Activated naive CD4-positive, alpha-beta T cell treated with anti-CD3 and anti-CD28 coated beads for 36 hours (primary cell): ENCODE measurements at regions of chr16 and their contacts with region 1.

Region 1: GRCh38 chr16:27235055-27235937 is 32.0 kb downstream of the KDM8 start:
- DNase-seq: peak; percentile 89
- H3K4me3 Mint-ChIP-seq: peak overlapping the region; percentile 65
- H3K27ac Mint-ChIP-seq: peak overlapping the region; percentile 98
- H3K4me1 Mint-ChIP-seq: peaks cover 98% of the 10 kb centered on the region
- H3K27me3 Mint-ChIP-seq: no peaks in the 10 kb centered on the region

Region 2: DNA sequence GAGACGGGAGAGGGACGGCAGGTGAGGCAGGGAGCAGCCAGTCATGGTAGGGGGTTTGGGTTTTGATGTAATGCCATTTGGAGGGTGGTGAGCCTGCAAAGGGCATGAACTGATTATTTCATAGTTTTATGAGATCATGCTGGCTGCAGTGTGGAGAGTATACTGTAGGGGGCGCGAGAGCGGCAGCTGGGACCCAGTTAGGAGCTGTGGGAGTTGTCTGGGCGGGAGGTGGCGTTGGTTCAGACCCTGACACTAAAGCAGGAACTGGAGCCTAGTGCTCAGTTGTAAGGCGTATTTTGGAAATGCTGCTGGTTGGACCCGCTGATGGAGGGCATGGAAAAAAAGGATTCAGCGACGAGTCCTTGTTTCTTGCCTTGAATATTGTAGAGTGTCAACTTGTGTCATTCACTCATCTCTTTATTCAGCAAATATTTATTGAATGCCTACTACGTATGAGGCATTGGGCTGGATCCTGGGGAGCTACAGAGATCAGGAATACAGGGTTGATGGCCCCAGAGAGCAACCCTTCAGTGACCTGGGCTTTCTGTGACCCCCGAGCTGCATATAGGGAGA is 55.7 kb before region 1 on chr16:
- CTCF ChIA-PET with region 1: interaction called, 38 read pairs
- intact Hi-C with region 1: loop called (anchors 1 kb)
- DNase-seq: peak; percentile 98
- H3K4me3 Mint-ChIP-seq: no peak overlapping the region
- H3K27ac Mint-ChIP-seq: peak overlapping the region; percentile 67
- H3K4me1 Mint-ChIP-seq: peaks cover 48% of the 10 kb centered on the region
- H3K27me3 Mint-ChIP-seq: no peaks in the 10 kb centered on the region

Region 3: GRCh38 chr16:27253526-27253930 is 18.2 kb after region 1 on chr16:
- CTCF ChIA-PET with region 1: interaction called, 43 read pairs
- intact Hi-C with region 1: loop called (anchors 1 kb)
- DNase-seq: no peak
- H3K4me3 Mint-ChIP-seq: peak overlapping the region; percentile 44
- H3K27ac Mint-ChIP-seq: peak overlapping the region; percentile 92
- H3K4me1 Mint-ChIP-seq: peaks cover 91% of the 10 kb centered on the region
- H3K27me3 Mint-ChIP-seq: no peaks in the 10 kb centered on the region

Region 4: DNA sequence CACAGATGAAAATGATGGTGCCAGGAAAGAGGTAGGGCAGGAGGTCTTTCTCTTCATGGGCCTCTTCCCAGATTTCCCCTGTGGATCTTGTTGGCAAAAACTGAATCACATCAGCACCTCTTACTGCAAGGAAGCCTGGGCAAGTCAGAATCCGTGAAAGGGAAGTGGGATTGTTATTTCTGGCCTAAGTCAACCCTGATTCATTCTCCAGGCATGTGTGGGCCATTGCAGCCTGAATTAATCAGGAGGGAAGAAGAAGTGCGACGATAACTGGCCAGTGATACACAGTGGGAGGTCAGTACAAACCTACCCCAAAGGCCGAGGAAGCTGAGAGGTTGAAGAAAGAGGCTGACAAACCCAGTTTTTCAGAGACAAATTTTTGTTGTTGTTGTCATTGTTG is 51.2 kb after region 1 on chr16:
- CTCF ChIA-PET with region 1: interaction called, 6 read pairs
- intact Hi-C with region 1: loop called (anchors 1 kb)
- DNase-seq: no peak
- H3K4me3 Mint-ChIP-seq: no peak overlapping the region
- H3K27ac Mint-ChIP-seq: no peak overlapping the region
- H3K4me1 Mint-ChIP-seq: peaks cover 72% of the 10 kb centered on the region
- H3K27me3 Mint-ChIP-seq: peaks cover 8% of the 10 kb centered on the region

Region 5: DNA sequence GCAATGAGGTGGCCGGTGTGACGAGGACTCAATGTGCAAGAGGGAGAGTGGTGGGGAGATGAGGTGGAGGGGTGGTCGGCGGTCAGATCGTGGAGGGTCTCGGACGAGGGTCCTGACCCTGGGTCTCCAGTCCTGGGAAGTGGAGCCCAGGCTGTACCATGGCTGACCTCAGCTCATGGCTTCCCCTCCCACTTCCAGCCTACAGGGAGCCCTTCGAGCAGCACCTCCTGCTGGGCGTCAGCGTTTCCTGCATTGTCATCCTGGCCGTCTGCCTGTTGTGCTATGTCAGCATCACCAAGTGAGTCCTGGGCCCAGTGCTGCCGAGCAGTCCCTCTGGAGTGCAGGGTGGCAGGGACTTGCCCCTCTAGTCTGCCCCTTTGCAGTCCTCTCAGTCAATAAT is 120.3 kb after region 1 on chr16:
- CTCF ChIA-PET with region 1: interaction called, 33 read pairs
- intact Hi-C with region 1: no loop called
- DNase-seq: peak; percentile 71
- H3K4me3 Mint-ChIP-seq: no peak overlapping the region
- H3K27ac Mint-ChIP-seq: peak overlapping the region; percentile 76
- H3K4me1 Mint-ChIP-seq: peaks cover 13% of the 10 kb centered on the region
- H3K27me3 Mint-ChIP-seq: no peaks in the 10 kb centered on the region

Region 6: DNA sequence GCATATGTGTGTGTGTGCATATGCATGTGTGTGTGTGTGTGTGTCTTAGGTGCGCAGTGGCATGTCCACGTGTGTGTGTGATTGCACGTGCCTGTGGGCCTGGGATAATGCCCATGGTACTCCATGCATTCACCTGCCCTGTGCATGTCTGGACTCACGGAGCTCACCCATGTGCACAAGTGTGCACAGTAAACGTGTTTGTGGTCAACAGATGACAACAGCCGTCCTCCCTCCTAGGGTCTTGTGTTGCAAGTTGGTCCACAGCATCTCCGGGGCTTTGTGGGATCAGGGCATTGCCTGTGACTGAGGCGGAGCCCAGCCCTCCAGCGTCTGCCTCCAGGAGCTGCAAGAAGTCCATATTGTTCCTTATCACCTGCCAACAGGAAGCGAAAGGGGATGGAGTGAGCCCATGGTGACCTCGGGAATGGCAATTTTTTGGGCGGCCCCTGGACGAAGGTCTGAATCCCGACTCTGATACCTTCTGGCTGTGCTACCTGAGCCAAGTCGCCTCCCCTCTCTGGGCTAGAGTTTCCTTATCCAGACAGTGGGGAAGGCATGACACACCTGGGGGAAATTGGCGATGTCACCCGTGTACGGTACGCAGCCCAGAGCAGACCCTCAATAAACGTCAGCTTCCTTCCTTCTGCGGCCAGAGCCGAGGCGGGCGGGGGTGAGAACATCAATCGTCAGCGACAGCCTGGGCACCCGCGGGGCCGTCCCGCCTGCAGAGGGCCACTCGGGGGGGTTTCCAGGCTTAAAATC is 214.3 kb after region 1 on chr16:
- CTCF ChIA-PET with region 1: interaction called, 3 read pairs
- intact Hi-C with region 1: loop called (anchors 1 kb)
- DNase-seq: peak; percentile 92
- H3K4me3 Mint-ChIP-seq: peak overlapping the region; percentile 61
- H3K27ac Mint-ChIP-seq: peak overlapping the region; percentile 94
- H3K4me1 Mint-ChIP-seq: peaks cover 86% of the 10 kb centered on the region
- H3K27me3 Mint-ChIP-seq: no peaks in the 10 kb centered on the region

Region 7: DNA sequence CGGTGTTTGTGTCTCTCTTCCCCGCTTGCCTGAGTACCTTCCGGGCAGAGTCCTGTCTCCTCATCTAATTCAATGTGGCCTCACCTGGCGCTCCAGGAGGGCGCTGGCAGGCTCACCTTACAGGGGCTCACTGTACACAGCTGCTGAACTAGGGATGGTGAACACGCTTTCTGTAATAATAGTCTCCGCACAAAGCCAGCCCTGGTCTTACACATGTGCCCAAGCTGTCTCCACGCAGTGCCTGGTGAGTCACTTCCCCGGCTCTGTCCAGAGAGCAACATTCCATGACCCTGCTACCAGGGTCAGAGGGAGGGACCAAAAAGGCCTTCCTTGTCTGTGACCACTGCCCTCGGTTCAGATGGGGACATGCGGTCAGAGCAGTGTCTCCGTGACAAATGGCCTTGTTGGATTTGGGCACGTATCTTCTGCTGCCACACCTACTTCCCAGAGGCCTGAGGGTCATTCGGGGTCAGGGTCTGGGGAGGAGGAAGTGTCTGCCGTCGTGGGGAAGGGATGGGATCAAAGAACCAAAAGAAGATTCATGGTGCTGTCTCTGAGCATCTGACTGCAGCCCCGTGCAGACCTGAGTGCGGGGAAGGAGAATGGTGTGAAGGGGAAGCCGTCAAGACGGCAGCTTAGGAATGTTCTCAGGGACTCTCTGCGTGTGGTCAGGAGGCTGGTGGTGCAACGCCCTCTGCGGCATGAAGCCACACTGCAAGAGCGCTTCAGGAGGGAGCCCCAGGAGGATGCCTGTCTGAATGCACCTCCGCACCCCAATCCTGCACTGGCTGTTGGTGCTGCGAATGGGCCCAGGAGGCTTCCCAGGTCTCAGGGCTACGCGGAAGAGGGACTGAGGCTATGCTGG is 235.5 kb after region 1 on chr16:
- CTCF ChIA-PET with region 1: no interaction called
- intact Hi-C with region 1: no loop called
- DNase-seq: no peak
- H3K4me3 Mint-ChIP-seq: no peak overlapping the region
- H3K27ac Mint-ChIP-seq: no peak overlapping the region
- H3K4me1 Mint-ChIP-seq: peaks cover under 1% of the 10 kb centered on the region
- H3K27me3 Mint-ChIP-seq: no peaks in the 10 kb centered on the region